ENCODE measurements at regions of chr10 and their contacts with region 1.

Region 1: GRCh38 chr10:75019370-75019769 is 92.1 kb upstream of the SAMD8 start:
- DNase-seq: peak; percentile 7
- H3K4me3 ChIP-seq: no peak overlapping the region
- H3K27ac ChIP-seq: no peak overlapping the region
- H3K4me1 ChIP-seq: no peaks in the 10 kb centered on the region
- H3K27me3 ChIP-seq: no peaks in the 10 kb centered on the region
- CTCF ChIP-seq: peak; percentile 5 to 42

Region 2: GRCh38 chr10:74262856-74263255 is 756.5 kb before region 1 on chr10:
- CTCF ChIA-PET with region 1: no interaction called
- dilution Hi-C with region 1: no loop called
- in situ Hi-C with region 1: no loop called
- intact Hi-C with region 1: loop called (anchors 1 kb)
- DNase-seq: no peak
- H3K4me3 ChIP-seq: no peak overlapping the region
- H3K27ac ChIP-seq: no peak overlapping the region
- H3K4me1 ChIP-seq: no peaks in the 10 kb centered on the region
- H3K27me3 ChIP-seq: no peaks in the 10 kb centered on the region
- CTCF ChIP-seq: no peak

Region 3: GRCh38 chr10:74753442-74754211 is 265.7 kb before region 1 on chr10:
- CTCF ChIA-PET with region 1: interaction called, 4 read pairs
- dilution Hi-C with region 1: no loop called
- in situ Hi-C with region 1: no loop called
- intact Hi-C with region 1: loop called (anchors 10 kb)
- DNase-seq: no peak
- H3K4me3 ChIP-seq: no peak overlapping the region
- H3K27ac ChIP-seq: no peak overlapping the region
- H3K4me1 ChIP-seq: no peaks in the 10 kb centered on the region
- H3K27me3 ChIP-seq: no peaks in the 10 kb centered on the region
- CTCF ChIP-seq: no peak

Region 4: DNA sequence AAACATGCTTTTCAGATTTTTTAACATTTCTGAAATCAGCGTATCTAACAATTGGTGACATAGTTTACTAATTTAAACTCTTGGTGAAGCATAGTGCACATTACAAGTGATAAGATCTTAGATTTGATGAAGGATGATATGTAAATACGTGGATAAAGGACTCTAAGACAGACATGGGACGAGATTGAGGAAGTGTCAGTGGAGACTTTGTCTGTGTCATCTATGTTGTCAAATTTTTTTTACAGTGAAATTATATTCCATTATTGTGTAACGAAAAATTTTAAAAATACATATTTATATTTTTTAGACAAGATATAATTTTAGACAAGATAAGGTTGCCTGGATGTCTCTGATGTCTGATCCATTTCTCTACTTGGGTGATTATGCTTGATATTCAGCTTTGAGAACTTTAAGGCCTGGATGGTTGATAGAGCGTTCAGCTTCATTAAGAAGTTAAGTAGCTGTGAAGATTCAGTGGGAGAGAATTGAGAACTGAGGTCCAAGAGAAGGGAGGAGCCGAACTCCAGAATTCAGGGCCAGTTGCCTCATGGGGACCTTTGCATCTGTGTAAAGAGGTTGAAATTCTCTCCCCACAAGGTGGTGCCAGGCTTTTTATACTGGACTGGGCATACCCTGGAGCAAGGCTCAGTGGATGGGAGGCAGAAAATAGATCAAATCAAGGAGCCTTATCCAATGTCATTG is 130.3 kb before region 1 on chr10:
- CTCF ChIA-PET with region 1: interaction called, 7 read pairs
- dilution Hi-C with region 1: no loop called
- in situ Hi-C with region 1: no loop called
- intact Hi-C with region 1: loop called (anchors 1 kb)
- DNase-seq: no peak
- H3K4me3 ChIP-seq: no peak overlapping the region
- H3K27ac ChIP-seq: no peak overlapping the region
- H3K4me1 ChIP-seq: no peaks in the 10 kb centered on the region
- H3K27me3 ChIP-seq: no peaks in the 10 kb centered on the region
- CTCF ChIP-seq: peak in 1 of 2 donors; percentile 42

Region 5: GRCh38 chr10:74963549-74963948 is 55.8 kb before region 1 on chr10:
- CTCF ChIA-PET with region 1: no interaction called
- dilution Hi-C with region 1: no loop called
- in situ Hi-C with region 1: no loop called
- intact Hi-C with region 1: no loop called
- DNase-seq: no peak
- H3K4me3 ChIP-seq: no peak overlapping the region
- H3K27ac ChIP-seq: no peak overlapping the region
- H3K4me1 ChIP-seq: peaks cover 3% of the 10 kb centered on the region
- H3K27me3 ChIP-seq: no peaks in the 10 kb centered on the region
- CTCF ChIP-seq: no peak

Measured in mammary epithelial cell (primary cell).